HepG2 (cell line): ENCODE measurements at regions of chr3 and their contacts with region 1.

Region 1: DNA sequence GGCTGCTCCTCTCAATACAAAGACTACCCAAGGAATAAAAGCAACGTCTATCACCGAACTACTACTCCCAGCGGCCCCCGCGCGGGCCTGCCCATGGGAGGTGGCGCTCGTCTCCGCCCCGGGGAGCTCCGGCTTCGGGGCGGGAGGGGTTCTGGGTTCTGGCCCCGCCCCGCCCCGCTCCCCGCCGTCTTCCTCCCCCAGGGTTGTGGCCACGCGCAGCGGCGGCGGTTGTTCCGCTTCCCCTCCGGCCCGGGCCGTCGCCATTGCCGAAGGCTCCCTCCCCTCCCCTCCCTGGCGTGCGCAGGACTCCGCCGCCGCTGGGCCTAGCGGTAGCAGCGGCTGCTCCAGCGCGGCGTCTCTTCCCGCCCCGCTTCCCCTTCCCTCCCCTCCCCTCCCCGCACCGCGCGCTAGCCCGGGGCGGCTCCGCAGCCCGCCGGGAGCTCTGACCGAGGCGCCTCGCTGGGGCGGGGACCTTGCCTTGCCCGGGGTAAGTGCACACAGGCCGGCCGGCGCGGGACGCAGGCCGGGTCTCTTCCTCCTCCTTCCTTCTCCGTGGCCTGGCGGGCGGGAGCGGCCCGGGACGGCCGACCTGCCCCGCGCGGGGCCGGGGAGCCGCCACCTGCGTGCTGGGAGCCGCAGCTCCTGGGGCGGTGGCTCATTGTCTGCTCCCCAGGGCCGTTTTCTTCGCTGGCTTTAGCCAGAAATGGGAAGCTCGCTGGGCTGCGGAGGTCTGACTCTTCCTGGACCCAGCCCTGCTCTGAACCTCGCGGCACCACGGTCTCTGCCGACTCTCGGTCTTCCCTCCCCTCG is at the start of gene PAK2:
- DNase-seq: peak; percentile 71
- ATAC-seq: peak; percentile 90
- H3K4me3 ChIP-seq: peak within 1 kb of the TSS; percentile 86 to 91 (median 88)
- H3K27ac ChIP-seq: peak within 1 kb of the TSS; percentile 90
- H3K4me1 ChIP-seq: peaks cover 63% of the 10 kb centered on the region
- H3K27me3 ChIP-seq: no peaks in the 10 kb centered on the region; a peak in 1 of 5 replicates
- CTCF ChIP-seq: 0 out of 2 replicates have a peak, but pooled peaks have one; percentile 23
- EP300 ChIP-seq: no peak
- POLR2A ChIP-seq: peak; percentile 73 to 79
- RAD21 ChIP-seq: no peak
- total RNA-seq, gene PAK2: 24.7 and 52.5 TPM in 2 replicates

Region 2: DNA sequence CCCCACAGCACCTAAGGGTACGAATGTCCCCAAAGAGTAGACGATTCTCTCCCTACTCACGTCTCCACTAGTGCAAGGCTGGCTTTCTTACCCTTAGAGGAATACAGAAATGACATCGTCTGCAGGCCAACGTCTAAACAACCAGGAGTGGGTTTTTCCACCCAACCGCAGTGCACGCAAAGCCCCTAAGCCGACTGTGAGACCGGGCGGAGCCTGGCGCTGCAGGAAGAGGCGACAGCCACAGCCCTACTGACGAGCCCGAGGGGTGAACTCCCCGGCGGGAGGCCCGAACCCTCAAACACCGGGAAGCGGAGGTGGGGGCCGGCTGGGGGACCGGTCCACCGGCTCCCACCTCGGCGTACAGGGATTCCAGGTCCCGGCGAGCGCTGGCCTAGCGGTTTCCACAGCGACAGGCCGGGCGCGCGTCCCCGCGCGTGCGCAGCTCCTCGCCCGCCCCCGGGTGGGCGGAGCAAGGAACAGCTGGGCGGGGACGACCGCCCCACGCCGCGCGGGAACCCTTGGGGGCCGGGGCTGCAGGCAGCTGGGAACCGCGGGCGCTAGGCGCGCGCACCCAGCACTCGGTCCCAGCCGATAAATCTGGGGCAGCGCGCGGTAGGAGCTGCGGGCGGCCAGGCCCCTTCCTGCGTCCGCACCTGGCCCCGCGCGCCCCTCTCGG is 27.9 kb before region 1 on chr3 and contains the starts of genes CEP19 and PIGX:
- CTCF ChIA-PET with region 1: no interaction called
- POLR2A ChIA-PET with region 1: interaction called, 25 read pairs
- in situ Hi-C with region 1: no loop called
- intact Hi-C with region 1: loop called (anchors 2 kb)
- DNase-seq: peak; percentile 60
- ATAC-seq: peak; percentile 85
- H3K4me3 ChIP-seq: peak within 1 kb of the TSS; percentile 90 to 97 (median 91)
- H3K27ac ChIP-seq: peak within 1 kb of the TSS; percentile 79
- H3K4me1 ChIP-seq: peaks cover 29% of the 10 kb centered on the region
- H3K27me3 ChIP-seq: peaks cover 0 to 4% of the 10 kb centered on the region in 2 experiments; a peak in 1 of 5 replicates
- CTCF ChIP-seq: no peak
- EP300 ChIP-seq: no peak
- POLR2A ChIP-seq: peak; percentile 44 to 87; a peak in 3 of 4 replicates
- RAD21 ChIP-seq: peak; percentile 63
- total RNA-seq, gene CEP19: 1.2 and 1.5 TPM in 2 replicates
- total RNA-seq, gene PIGX: 19.2 and 21.3 TPM in 2 replicates

Region 3: GRCh38 chr3:196754091-196754923 is 14.4 kb after region 1 on chr3:
- CTCF ChIA-PET with region 1: no interaction called
- POLR2A ChIA-PET with region 1: interaction called, 20 read pairs
- in situ Hi-C with region 1: no loop called
- intact Hi-C with region 1: loop called (anchors 2 kb)
- DNase-seq: peak; percentile 83
- ATAC-seq: peak; percentile 93
- H3K4me3 ChIP-seq: peak overlapping the region; percentile 7 to 30 (median 28); a peak in 2 of 6 replicates
- H3K27ac ChIP-seq: peak overlapping the region; percentile 56
- H3K4me1 ChIP-seq: peaks cover 53% of the 10 kb centered on the region
- H3K27me3 ChIP-seq: no peaks in the 10 kb centered on the region
- CTCF ChIP-seq: no peak
- EP300 ChIP-seq: no peak
- POLR2A ChIP-seq: no peak
- RAD21 ChIP-seq: no peak

Region 4: DNA sequence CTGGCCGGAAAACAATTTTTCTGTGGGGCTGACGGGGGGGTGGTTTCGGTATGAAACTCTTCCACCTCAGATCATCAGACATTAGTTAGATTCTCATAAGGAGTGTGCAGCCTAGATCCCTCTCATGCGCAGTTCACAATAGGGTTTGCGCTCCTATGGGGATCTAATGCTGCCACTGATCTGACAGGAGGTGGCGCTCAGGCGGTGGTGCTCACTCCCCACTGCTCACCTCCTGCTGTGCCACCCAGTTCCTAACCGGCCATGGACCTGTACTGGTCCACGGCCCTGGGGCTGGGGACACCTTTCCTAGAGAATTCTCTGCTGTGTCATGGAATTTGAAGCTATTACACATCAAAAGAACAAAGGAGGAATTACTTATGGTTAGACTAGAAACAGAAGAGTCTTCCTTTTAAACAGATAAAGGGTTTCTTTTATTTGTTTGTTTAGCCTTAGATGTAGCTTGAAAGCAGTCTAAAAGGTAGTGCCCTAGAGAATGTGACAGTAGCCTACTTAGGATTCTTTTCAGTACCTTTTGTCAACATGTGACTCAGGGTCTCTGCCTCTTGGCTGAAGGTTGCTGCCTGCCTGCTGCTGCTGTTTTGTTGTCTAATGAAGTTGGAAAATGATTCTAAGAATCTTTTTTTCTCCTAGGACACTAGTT is 50.0 kb after region 1 on chr3:
- CTCF ChIA-PET with region 1: no interaction called
- POLR2A ChIA-PET with region 1: no interaction called
- in situ Hi-C with region 1: no loop called
- intact Hi-C with region 1: loop called (anchors 5 kb)
- DNase-seq: peak; percentile 63
- ATAC-seq: peak; percentile 44
- H3K4me3 ChIP-seq: no peak overlapping the region
- H3K27ac ChIP-seq: no peak overlapping the region
- H3K4me1 ChIP-seq: peaks cover 56% of the 10 kb centered on the region
- H3K27me3 ChIP-seq: no peaks in the 10 kb centered on the region
- CTCF ChIP-seq: no peak
- EP300 ChIP-seq: no peak
- POLR2A ChIP-seq: no peak
- RAD21 ChIP-seq: no peak